CD14-positive monocyte (primary cell): ENCODE measurements at regions of chr7 and their contacts with region 1.

Region 1: GRCh38 chr7:3154912-3155494 is 111.3 kb upstream of the CARD11 start:
- DNase-seq: peak; percentile 19 to 40 (median 37)
- H3K4me3 ChIP-seq: no peak overlapping the region
- H3K4me3 Mint-ChIP-seq: no peak overlapping the region
- H3K27ac ChIP-seq: no peak overlapping the region
- H3K27ac Mint-ChIP-seq: no peak overlapping the region
- H3K4me1 ChIP-seq: no peaks in the 10 kb centered on the region
- H3K4me1 Mint-ChIP-seq: peaks cover 2% of the 10 kb centered on the region
- H3K27me3 ChIP-seq: peaks cover 0 to 3% of the 10 kb centered on the region in 2 donors
- H3K27me3 Mint-ChIP-seq: peaks cover 12 to 16% (median 14%) of the 10 kb centered on the region in 3 donors
- CTCF ChIP-seq: peak; percentile 81

Region 2: DNA sequence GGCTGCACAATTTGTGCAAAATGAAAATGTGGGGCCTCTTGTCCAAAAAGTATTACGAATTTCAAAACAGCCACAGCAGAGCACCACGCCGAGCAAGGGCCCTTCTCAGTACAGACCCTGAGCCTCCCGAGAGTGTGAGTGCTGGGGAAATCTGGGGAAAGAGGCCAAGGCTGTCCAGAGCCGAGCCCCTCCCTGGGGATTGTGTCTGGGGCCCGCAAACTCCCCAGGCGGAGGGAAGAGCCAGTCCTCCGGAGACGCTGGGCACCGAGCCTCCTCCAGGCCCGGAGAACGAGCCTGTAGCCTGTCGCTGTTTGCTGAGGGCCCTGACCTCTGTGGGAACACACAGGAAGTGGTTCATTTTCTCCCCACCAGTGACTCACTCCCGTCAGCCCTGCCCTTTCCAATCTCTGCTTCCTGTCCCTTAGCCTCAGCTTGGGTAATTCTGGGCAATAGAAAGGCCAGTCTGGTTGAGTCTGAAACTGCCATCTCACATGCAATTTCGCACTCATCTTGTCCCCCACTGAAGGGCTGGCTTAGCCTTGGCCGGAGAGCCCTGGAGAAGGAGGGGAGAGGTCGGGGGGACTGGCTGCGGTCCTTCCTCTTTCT is 291.4 kb before region 1 on chr7:
- intact Hi-C with region 1: loop called (anchors 5 kb)
- DNase-seq: peak; percentile 96 to 99 (median 98)
- H3K4me3 ChIP-seq: peak overlapping the region in 2 of 3 experiments; percentile 28 to 49
- H3K4me3 Mint-ChIP-seq: peak overlapping the region; percentile 67 to 91
- H3K27ac ChIP-seq: peak overlapping the region; percentile 93 to 99
- H3K27ac Mint-ChIP-seq: peak overlapping the region; percentile 98 to 100 (median 100)
- H3K4me1 ChIP-seq: peaks cover 29% of the 10 kb centered on the region in 2 donors
- H3K4me1 Mint-ChIP-seq: peaks cover 30% of the 10 kb centered on the region
- H3K27me3 ChIP-seq: peaks cover 0 to 10% of the 10 kb centered on the region in 2 donors
- H3K27me3 Mint-ChIP-seq: peaks cover 40 to 55% (median 42%) of the 10 kb centered on the region in 3 donors
- CTCF ChIP-seq: no peak

Region 3: GRCh38 chr7:2886900-2887299 is 268.1 kb before region 1 on chr7:
- intact Hi-C with region 1: loop called (anchors 5 kb)
- DNase-seq: peak; percentile 47 to 72 (median 52)
- H3K4me3 ChIP-seq: no peak overlapping the region
- H3K4me3 Mint-ChIP-seq: no peak overlapping the region
- H3K27ac ChIP-seq: no peak overlapping the region
- H3K27ac Mint-ChIP-seq: peak overlapping the region in 1 of 7 donors; percentile 7
- H3K4me1 ChIP-seq: no peaks in the 10 kb centered on the region
- H3K4me1 Mint-ChIP-seq: peaks cover 4% of the 10 kb centered on the region
- H3K27me3 ChIP-seq: no peaks in the 10 kb centered on the region
- H3K27me3 Mint-ChIP-seq: peaks cover 10 to 22% (median 11%) of the 10 kb centered on the region in 3 donors
- CTCF ChIP-seq: peak; percentile 56

Region 4: GRCh38 chr7:3065724-3066143 is 89.3 kb before region 1 on chr7:
- intact Hi-C with region 1: loop called in 1 of 2 experiments (anchors 5 kb)
- DNase-seq: peak; percentile 12 to 43 (median 15)
- H3K4me3 ChIP-seq: no peak overlapping the region
- H3K4me3 Mint-ChIP-seq: no peak overlapping the region
- H3K27ac ChIP-seq: no peak overlapping the region
- H3K27ac Mint-ChIP-seq: peak overlapping the region in 1 of 7 donors; percentile 18
- H3K4me1 ChIP-seq: no peaks in the 10 kb centered on the region
- H3K4me1 Mint-ChIP-seq: peaks cover 7% of the 10 kb centered on the region
- H3K27me3 ChIP-seq: no peaks in the 10 kb centered on the region
- H3K27me3 Mint-ChIP-seq: peaks cover 0 to 6% (median 3%) of the 10 kb centered on the region in 3 donors
- CTCF ChIP-seq: peak; percentile 71

Region 5: DNA sequence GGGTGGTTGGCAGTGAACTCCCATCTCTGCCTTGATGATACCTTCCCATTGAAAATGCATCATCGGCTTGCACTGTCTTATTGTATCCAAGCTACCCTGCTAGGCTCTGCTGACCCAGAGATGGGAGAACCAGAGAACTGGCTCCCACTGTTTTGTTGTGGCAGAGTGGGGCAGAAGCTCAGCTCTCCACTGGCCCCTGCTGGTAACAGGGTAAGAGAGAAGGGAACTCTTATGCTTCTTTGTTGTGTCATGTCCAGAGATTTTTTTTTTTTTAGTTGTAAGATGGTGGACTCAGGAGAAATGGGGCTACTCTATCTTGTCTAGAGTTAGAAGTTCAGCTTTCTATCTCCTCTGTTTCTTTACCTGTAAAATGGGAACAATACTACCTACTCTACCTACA is 45.5 kb after region 1 on chr7:
- intact Hi-C with region 1: no loop called
- DNase-seq: no peak
- H3K4me3 ChIP-seq: no peak overlapping the region
- H3K4me3 Mint-ChIP-seq: no peak overlapping the region
- H3K27ac ChIP-seq: no peak overlapping the region
- H3K27ac Mint-ChIP-seq: no peak overlapping the region
- H3K4me1 ChIP-seq: no peaks in the 10 kb centered on the region
- H3K4me1 Mint-ChIP-seq: peaks cover 5% of the 10 kb centered on the region
- H3K27me3 ChIP-seq: no peaks in the 10 kb centered on the region
- H3K27me3 Mint-ChIP-seq: peaks cover 1 to 7% (median 6%) of the 10 kb centered on the region in 3 donors
- CTCF ChIP-seq: no peak